Activated CD4-positive, alpha-beta memory T cell treated with anti-CD3 and anti-CD28 coated beads for 36 hours (primary cell): ENCODE measurements at regions of chr22 and their contacts with region 1.

Region 1: DNA sequence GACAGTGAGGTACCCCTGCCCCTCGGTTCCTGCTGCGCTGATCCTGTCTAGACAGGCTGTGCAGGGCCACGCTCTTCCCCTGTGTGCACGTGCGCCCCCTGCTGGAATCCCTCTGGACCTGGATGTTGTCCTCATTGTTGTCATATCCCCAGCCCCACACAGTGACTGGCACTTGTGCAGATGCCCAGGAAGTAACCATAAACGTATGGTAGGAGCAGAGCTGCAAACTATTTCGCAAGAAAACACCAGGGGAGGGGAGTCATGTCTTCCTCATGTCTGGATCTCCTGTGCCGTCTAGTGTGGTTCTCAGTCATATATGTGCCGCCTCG is 114.7 kb downstream of the CRYBB2 start:
- DNase-seq: peak; percentile 74
- H3K4me3 Mint-ChIP-seq: no peak overlapping the region
- H3K27ac Mint-ChIP-seq: no peak overlapping the region
- H3K4me1 Mint-ChIP-seq: peaks cover 4% of the 10 kb centered on the region
- H3K27me3 Mint-ChIP-seq: peaks cover 2% of the 10 kb centered on the region

Region 2: GRCh38 chr22:25202290-25202921 is 131.7 kb before region 1 on chr22:
- CTCF ChIA-PET with region 1: interaction called, 11 read pairs
- POLR2A ChIA-PET with region 1: no interaction called
- intact Hi-C with region 1: no loop called
- DNase-seq: peak; percentile 66
- H3K4me3 Mint-ChIP-seq: no peak overlapping the region
- H3K27ac Mint-ChIP-seq: no peak overlapping the region
- H3K4me1 Mint-ChIP-seq: no peaks in the 10 kb centered on the region
- H3K27me3 Mint-ChIP-seq: no peaks in the 10 kb centered on the region

Region 3: GRCh38 chr22:25235547-25236290 is 98.4 kb before region 1 on chr22:
- CTCF ChIA-PET with region 1: interaction called, 6 read pairs
- POLR2A ChIA-PET with region 1: no interaction called
- intact Hi-C with region 1: loop called (anchors 10 kb)
- DNase-seq: peak; percentile 83
- H3K4me3 Mint-ChIP-seq: no peak overlapping the region
- H3K27ac Mint-ChIP-seq: no peak overlapping the region
- H3K4me1 Mint-ChIP-seq: peaks cover 4% of the 10 kb centered on the region
- H3K27me3 Mint-ChIP-seq: peaks cover 31% of the 10 kb centered on the region

Region 4: DNA sequence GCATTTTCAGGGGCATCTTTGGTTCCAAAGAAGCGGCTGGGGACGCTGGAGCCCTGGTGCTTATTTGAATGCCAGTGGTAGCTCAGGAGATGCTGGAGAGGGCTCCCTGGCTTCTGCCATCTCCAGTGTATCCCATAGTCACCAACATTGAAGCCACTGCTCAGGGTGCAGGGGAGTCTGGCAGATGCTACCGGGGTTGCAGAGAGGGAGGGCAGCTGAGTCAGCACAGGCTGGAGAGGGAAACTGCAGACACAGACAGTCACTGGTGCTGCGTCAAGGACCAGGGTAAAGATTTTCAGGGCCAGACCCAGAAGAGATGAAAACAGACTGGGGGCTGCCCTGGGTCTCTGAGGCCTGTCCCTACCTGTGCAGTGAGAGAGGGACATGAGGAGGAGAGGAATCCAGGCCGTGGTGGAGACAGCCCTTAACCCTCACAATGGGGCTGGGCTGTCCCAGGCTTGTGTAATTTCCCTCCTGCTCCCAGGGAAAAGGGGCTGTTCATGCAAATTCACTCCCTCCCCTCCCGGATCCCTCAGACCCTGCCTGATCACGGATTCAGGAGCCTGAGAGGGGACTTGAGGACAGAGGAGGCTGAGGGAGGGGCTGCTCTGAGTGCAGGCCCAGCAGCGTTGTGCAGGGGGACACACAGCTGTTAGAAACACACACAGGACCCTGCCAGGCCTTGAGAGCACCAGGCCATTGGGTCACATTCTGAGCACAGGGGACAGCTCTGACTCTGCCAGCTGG is 103.5 kb after region 1 on chr22:
- CTCF ChIA-PET with region 1: no interaction called
- POLR2A ChIA-PET with region 1: no interaction called
- intact Hi-C with region 1: no loop called
- DNase-seq: no peak
- H3K4me3 Mint-ChIP-seq: no peak overlapping the region
- H3K27ac Mint-ChIP-seq: no peak overlapping the region
- H3K4me1 Mint-ChIP-seq: no peaks in the 10 kb centered on the region
- H3K27me3 Mint-ChIP-seq: no peaks in the 10 kb centered on the region